CD8-positive, alpha-beta T cell (primary cell): ENCODE measurements at regions of chr7 and their contacts with region 1.

Region 1: GRCh38 chr7:134605973-134606923 is 40.4 kb upstream of the BPGM start:
- DNase-seq: peak; percentile 25 to 75 (median 60)
- ATAC-seq: peak; percentile 89
- H3K4me3 ChIP-seq: no peak overlapping the region
- H3K4me3 Mint-ChIP-seq: peak overlapping the region; percentile 29
- H3K27ac ChIP-seq: no peak overlapping the region
- H3K27ac Mint-ChIP-seq: no peak overlapping the region
- H3K4me1 ChIP-seq: no peaks in the 10 kb centered on the region
- H3K4me1 Mint-ChIP-seq: peaks cover 5% of the 10 kb centered on the region
- H3K27me3 ChIP-seq: peaks cover 0 to 4% of the 10 kb centered on the region in 2 experiments
- H3K27me3 Mint-ChIP-seq: peaks cover 28% of the 10 kb centered on the region
- CTCF ChIP-seq: peak; percentile 95

Region 2: DNA sequence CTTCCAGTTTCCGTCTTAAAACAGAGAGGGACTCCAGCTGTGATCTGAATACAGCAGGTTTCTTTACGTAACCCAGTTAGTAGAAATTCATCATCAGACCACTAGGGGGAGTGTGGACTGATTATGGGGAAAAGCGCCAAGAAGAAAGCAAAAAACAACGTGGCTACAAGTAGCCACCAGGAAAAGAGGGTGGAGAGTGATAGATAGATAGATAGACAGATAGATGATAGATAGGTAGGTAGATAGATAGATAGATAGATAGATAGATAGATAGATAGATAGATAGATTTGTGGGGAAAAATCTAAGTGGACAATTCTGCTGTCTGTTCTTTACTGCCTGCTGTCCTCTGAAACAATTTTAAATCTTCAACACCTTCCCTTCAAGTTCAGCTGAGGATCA is 91.6 kb before region 1 on chr7:
- CTCF ChIA-PET with region 1: interaction called, 3 read pairs
- POLR2A ChIA-PET with region 1: no interaction called
- intact Hi-C with region 1: loop called (anchors 1 kb)
- DNase-seq: peak in 3 of 9 experiments; percentile 33 to 75 (median 70)
- ATAC-seq: peak; percentile 57
- H3K4me3 ChIP-seq: no peak overlapping the region
- H3K4me3 Mint-ChIP-seq: no peak overlapping the region
- H3K27ac ChIP-seq: no peak overlapping the region
- H3K27ac Mint-ChIP-seq: no peak overlapping the region
- H3K4me1 ChIP-seq: no peaks in the 10 kb centered on the region
- H3K4me1 Mint-ChIP-seq: peaks cover 4% of the 10 kb centered on the region
- H3K27me3 ChIP-seq: peaks cover 0 to 2% of the 10 kb centered on the region in 2 experiments
- H3K27me3 Mint-ChIP-seq: peaks cover 3% of the 10 kb centered on the region
- CTCF ChIP-seq: peak; percentile 88

Region 3: DNA sequence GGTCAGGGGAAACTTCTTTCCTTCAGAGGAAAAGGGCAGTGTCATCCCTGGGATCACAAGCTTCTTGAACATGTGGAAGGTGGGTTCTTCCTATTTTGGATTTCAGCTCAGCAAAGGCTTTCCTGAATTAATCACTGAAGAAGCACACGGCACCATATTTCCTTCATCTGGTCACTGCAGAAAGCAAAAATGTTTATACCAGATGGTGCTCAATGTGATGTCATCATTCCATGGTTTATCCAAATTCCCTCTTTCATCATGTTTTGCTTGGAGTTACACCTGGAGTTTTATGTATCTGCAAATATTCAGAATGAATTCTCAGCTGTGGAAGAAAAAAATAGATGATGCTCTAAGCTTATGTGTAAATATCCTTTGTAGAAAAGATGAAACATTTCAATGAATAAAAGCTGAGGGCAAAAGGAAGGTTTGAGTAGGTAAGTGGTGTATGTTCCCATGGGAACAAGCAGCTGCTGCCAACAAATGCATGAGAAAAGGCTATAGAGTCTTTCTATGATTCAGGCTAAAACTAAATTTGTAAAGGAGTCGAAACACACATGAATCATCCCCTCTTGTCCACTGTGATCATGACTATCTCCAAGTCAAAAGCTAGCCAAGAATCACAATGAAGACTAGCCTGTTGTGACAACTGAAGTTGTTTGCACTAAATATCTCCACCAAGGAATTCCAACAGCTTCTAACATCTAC is 13.5 kb after region 1 on chr7:
- CTCF ChIA-PET with region 1: interaction called, 17 read pairs
- POLR2A ChIA-PET with region 1: no interaction called
- intact Hi-C with region 1: no loop called
- DNase-seq: no peak
- ATAC-seq: no peak
- H3K4me3 ChIP-seq: no peak overlapping the region
- H3K4me3 Mint-ChIP-seq: no peak overlapping the region
- H3K27ac ChIP-seq: no peak overlapping the region
- H3K27ac Mint-ChIP-seq: no peak overlapping the region
- H3K4me1 ChIP-seq: no peaks in the 10 kb centered on the region
- H3K4me1 Mint-ChIP-seq: no peaks in the 10 kb centered on the region
- H3K27me3 ChIP-seq: peaks cover 2 to 3% of the 10 kb centered on the region in 2 experiments
- H3K27me3 Mint-ChIP-seq: peaks cover 39% of the 10 kb centered on the region
- CTCF ChIP-seq: no peak